ENCODE measurements at regions of chr7 and their contacts with region 1.

Region 1: DNA sequence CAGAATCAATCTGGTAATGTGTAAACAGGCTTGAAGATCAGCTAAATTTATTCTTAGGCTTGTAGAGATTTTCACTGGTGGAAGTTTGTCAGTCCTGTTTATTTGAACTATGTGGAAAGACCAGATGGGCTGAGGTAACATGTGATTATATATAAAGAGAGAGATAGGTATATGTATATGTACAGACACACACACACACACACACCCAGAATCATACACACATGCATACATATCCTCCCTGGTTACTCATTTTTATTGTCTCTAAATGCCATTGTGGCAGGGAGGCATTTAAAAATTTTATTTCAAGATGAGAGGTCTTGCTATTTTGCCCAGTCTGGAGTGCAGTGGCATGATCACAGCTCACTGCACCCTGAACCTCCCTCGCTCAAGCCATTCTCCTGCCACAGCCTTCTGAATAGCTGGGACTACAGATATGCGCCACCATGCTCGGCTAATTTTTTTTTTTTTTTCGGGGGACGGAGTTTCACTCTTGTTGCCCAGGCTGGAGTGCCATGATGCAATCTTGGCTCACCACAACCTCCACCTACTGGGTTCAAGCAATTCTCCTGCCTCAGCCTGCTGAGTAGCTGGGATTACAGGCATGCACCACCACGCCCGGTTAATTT is 78.1 kb upstream of the CYTH3 start:
- DNase-seq: no peak
- ATAC-seq: no peak
- H3K4me3 ChIP-seq: no peak overlapping the region
- H3K27ac ChIP-seq: no peak overlapping the region
- H3K4me1 ChIP-seq: peaks cover 10% of the 10 kb centered on the region; the same call in 1 of the 2 replicates
- H3K27me3 ChIP-seq: no peaks in the 10 kb centered on the region
- CTCF ChIP-seq: no peak
- EP300 ChIP-seq: no peak
- POLR2A ChIP-seq: no peak
- RAD21 ChIP-seq: no peak

Region 2: DNA sequence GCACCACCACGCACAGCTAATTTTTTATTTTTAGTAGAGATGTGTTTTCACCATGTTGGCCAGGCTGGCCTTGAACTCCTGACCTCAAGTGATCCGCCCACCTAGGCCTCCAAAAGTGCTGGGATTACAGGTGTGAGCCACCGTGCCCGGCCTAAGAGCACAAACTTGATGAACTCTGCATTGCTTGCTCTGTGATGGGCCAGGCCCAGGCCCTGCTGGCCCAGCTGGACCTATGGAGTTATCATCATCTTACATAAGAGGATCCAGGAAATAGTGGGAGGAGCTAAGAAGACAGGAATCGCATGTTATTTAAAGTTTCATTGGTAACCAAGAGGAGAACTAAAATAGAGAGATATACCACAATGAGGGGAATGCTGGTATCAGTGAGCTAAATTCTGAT is 10.3 kb after region 1 on chr7:
- CTCF ChIA-PET with region 1: interaction called, 11 read pairs
- POLR2A ChIA-PET with region 1: no interaction called
- RAD21 ChIA-PET with region 1: interaction called, 5 read pairs
- SMC1A ChIA-PET with region 1: interaction called, 9 read pairs
- in situ Hi-C with region 1: no loop called
- intact Hi-C with region 1: no loop called
- DNase-seq: no peak
- ATAC-seq: no peak
- H3K4me3 ChIP-seq: no peak overlapping the region
- H3K27ac ChIP-seq: no peak overlapping the region
- H3K4me1 ChIP-seq: no peaks in the 10 kb centered on the region
- H3K27me3 ChIP-seq: no peaks in the 10 kb centered on the region
- CTCF ChIP-seq: no peak
- EP300 ChIP-seq: no peak
- POLR2A ChIP-seq: no peak
- RAD21 ChIP-seq: no peak

Measured in GM12878 (cell line).